Activated T-helper 1 cell treated with anti-CD3 and anti-CD28 coated beads, Interleukin-12 subunit alpha, Interleukin-12 subunit beta, Interleukin-2, Interleukin-4 antibody, amounts not matched to agents 30 ng/mL and 10 ng/mL and 1 ng/mL, durations not matched to agents 14 hours and 24 hours and 36 hours (primary cell): ENCODE measurements at regions of chrX and their contacts with region 1.

Region 1: DNA sequence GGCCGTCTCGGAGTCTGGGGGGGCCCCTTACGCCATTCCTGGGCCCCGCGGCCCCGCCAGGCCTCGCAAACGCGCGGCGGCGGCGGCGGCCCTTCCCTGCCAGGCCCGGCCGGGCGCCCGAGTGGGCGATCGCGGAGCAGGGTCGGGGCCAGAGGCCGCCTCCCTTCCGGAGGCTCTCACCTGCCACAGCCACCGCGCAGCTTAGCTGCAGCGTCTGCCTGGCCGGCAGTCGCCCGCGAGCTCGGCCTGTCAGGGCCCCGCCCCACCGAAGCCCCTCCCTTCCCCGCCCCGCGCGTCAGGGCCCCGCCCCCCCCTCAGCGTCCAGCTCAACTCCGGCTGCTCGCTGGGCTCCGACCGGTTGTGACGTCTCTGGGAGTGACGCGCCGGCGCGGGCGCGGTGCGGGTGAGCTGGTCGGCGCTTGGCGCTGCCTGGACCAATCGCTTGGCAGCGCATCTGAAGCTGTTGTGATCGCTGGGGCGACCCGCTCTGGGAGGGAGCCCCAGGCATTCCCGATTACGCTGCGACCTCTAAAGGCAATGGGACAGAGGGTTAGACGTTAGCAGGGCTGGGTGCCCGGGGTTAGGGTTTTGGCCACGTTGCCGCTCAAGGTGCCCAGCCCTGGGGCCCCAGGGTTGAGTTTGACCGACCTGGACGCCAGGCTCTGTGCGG is at the start of gene SLC10A3:
- DNase-seq: peak; percentile 85
- H3K4me3 Mint-ChIP-seq: peak within 1 kb of the TSS; percentile 90
- H3K27ac Mint-ChIP-seq: peak within 1 kb of the TSS; percentile 92
- H3K4me1 Mint-ChIP-seq: peaks cover 10% of the 10 kb centered on the region
- H3K27me3 Mint-ChIP-seq: no peaks in the 10 kb centered on the region
- total RNA-seq, gene SLC10A3: 19.9 and 23.1 TPM in 2 replicates

Region 2: GRCh38 chrX:154074199-154074598 is 416.4 kb before region 1 on chrX:
- intact Hi-C with region 1: no loop called
- DNase-seq: no peak
- H3K4me3 Mint-ChIP-seq: no peak overlapping the region
- H3K27ac Mint-ChIP-seq: no peak overlapping the region
- H3K4me1 Mint-ChIP-seq: peaks cover 11% of the 10 kb centered on the region
- H3K27me3 Mint-ChIP-seq: no peaks in the 10 kb centered on the region

Region 3: DNA sequence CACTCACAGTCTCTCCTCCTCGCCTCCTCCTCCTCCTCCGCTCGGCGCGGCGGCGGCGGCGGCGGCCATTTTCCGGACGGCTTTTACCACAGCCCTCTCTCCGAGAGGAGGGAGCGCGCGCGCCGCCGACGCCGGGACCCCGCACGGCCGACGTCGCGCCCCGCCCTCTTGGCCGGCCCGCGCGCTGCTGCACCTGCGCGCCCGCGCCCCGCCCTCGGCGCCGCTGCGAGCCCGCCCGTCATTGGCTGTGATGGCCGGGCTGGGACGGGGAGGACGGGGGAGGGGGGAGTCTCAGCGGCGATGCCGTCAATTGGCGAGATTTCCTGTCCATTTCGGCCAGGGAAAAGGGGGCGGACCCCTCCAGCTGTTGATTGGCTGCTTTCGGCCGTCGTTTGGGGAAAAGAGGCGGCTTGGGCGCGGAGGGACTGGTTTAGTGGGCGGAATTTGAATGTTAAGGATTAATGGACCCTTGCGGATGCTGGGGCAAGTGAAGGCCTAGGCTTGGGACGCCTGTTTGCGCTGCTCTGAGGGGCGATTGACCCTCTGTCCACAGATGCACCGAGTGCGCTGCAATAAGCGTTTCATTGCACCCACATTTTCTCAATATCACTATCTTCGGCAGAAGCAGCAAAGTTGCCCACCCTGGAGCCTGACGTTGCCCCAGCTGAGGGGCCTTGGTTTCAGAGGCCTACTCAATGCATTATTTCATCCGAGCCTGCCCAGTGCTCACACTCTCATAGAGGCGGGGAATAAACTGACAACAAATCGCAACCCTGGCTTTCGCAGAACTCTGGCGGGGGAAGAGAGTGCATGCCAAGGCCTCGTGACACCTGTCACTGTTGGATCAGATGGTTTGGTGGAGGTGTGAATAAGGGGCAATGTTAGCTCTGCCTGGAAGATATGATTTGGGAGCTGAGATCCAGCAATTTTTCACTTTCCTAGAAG is 392.7 kb before region 1 on chrX and contains the start of gene MECP2:
- intact Hi-C with region 1: loop called (anchors 1 kb)
- DNase-seq: peak; percentile 84
- H3K4me3 Mint-ChIP-seq: peak within 1 kb of the TSS; percentile 97
- H3K27ac Mint-ChIP-seq: peak within 1 kb of the TSS; percentile 99
- H3K4me1 Mint-ChIP-seq: peaks cover 54% of the 10 kb centered on the region
- H3K27me3 Mint-ChIP-seq: no peaks in the 10 kb centered on the region
- total RNA-seq, gene MECP2: 53.4 and 59.4 TPM in 2 replicates

Region 4: GRCh38 chrX:154411322-154411980 is 79.1 kb before region 1 on chrX and contains the start of gene TAFAZZIN:
- intact Hi-C with region 1: loop called (anchors 1 kb)
- DNase-seq: peak; percentile 74
- H3K4me3 Mint-ChIP-seq: peak within 1 kb of the TSS; percentile 93
- H3K27ac Mint-ChIP-seq: peak within 1 kb of the TSS; percentile 94
- H3K4me1 Mint-ChIP-seq: peaks cover 12% of the 10 kb centered on the region
- H3K27me3 Mint-ChIP-seq: no peaks in the 10 kb centered on the region
- total RNA-seq, gene TAFAZZIN: 65.2 and 69.2 TPM in 2 replicates

Region 5: GRCh38 chrX:154436374-154436982 is 54.1 kb before region 1 on chrX:
- intact Hi-C with region 1: no loop called
- DNase-seq: peak; percentile 49
- H3K4me3 Mint-ChIP-seq: peak overlapping the region; percentile 83
- H3K27ac Mint-ChIP-seq: peak overlapping the region; percentile 76
- H3K4me1 Mint-ChIP-seq: peaks cover 6% of the 10 kb centered on the region
- H3K27me3 Mint-ChIP-seq: no peaks in the 10 kb centered on the region

Region 6: DNA sequence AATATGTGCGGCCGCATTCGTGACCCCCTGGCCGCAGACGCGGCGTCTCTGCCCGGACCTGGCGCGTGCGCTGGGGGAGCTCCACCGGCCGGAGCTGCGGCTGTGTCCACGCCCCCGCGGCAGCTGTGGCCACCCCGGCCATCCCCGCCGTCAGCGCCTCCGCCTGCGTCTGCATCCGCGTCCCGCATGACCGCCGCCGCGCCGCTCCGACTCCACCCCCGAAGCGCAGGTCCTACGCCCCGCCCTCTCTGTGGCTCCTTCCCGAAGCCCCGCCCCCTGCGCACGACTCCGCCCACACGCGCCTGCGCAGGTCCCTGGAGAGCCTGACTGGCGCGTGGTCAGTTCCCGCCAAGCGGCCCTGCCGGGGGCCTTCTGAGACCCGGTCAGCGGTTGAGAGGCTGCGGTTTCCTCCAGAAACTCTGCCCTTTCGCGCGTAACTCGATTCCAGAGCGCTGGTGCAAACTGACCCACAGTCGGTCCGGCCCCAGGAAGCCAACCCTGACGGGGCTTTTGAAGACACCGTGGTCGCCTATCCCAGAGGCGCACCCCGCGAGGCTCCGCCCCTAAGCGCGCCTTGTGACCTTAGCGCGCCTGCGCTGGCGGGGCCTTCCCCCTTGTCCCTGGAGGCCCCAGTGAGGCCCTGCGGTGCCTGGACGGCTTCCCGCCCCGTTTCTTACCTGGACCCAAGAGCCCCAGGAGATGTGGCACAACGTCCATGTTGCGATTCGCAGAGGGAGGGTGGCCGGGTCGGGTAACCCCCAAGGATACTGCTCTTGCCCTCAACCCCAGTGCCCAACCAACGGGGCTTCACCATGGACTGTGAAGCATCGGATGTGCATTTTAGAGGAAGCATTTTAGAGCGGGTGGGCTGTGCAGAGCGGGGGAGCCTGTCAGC is 11.6 kb before region 1 on chrX and contains the start of gene LAGE3:
- intact Hi-C with region 1: loop called (anchors 1 kb)
- DNase-seq: peak; percentile 93
- H3K4me3 Mint-ChIP-seq: peak within 1 kb of the TSS; percentile 88
- H3K27ac Mint-ChIP-seq: peak within 1 kb of the TSS; percentile 91
- H3K4me1 Mint-ChIP-seq: peaks cover 23% of the 10 kb centered on the region
- H3K27me3 Mint-ChIP-seq: no peaks in the 10 kb centered on the region
- total RNA-seq, gene LAGE3: 60.3 and 63.2 TPM in 2 replicates

Region 7: GRCh38 chrX:154534862-154535670 is 44.5 kb after region 1 on chrX:
- intact Hi-C with region 1: loop called (anchors 5 kb)
- DNase-seq: peak; percentile 80
- H3K4me3 Mint-ChIP-seq: no peak overlapping the region
- H3K27ac Mint-ChIP-seq: no peak overlapping the region
- H3K4me1 Mint-ChIP-seq: peaks cover 6% of the 10 kb centered on the region
- H3K27me3 Mint-ChIP-seq: no peaks in the 10 kb centered on the region

Region 8: GRCh38 chrX:154661170-154661569 is 170.6 kb after region 1 on chrX:
- intact Hi-C with region 1: no loop called
- DNase-seq: no peak
- H3K4me3 Mint-ChIP-seq: no peak overlapping the region
- H3K27ac Mint-ChIP-seq: no peak overlapping the region
- H3K4me1 Mint-ChIP-seq: no peaks in the 10 kb centered on the region
- H3K27me3 Mint-ChIP-seq: peaks cover 4% of the 10 kb centered on the region